ENCODE measurements at regions of chr10 and their contacts with region 1.

Region 1: GRCh38 chr10:104784452-104784851 is 143.4 kb downstream of the SORCS3 start:
- DNase-seq: no peak

Region 2: GRCh38 chr10:104300736-104301292 is 483.6 kb before region 1 on chr10:
- intact Hi-C with region 1: no loop called
- DNase-seq: no peak

Region 3: DNA sequence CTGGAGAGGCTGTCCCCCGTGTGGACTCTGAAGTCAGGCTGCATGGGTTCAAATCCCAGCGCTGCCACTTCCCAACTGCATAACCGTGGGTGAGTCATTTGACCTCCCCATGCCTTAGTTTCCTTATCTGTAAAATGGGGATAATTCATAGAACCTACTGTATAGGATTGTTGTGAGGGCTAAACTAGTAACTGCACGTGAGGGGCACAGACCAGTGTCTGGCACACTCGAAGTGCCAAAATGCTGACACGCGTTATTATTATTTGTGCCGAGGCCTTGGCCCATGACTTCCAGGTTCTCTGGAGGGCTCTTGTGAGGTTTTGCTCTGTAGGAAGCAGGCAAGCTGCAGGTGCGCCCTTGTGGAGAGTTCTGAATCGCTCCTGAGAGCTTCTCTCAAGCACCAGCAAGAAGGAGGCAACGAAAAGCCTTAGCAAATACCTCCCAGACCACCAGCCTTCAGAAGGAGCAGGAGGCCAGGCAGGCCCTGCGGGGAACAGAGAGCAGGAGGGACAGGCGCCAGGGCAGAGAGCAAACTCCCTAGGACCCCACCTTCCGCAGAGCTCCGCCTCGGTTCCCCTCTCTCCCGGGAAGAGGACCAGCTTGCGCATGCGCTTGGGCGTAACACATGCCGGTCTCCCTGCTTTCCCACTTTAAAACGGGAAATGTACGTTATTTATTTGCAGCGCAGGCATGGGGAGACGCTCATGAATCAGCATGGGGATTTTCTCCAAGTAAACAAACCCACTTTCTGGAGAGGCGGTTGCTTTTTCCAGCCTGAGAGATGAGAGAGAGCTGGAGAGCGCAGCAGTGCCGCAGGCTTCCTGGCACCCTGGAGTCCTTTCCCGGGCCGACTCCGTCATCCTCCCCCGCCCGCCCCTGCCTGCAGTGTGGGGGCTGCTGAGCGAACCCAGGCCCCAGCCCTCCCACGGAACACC is 103.7 kb before region 1 on chr10:
- intact Hi-C with region 1: no loop called
- DNase-seq: no peak

Region 4: DNA sequence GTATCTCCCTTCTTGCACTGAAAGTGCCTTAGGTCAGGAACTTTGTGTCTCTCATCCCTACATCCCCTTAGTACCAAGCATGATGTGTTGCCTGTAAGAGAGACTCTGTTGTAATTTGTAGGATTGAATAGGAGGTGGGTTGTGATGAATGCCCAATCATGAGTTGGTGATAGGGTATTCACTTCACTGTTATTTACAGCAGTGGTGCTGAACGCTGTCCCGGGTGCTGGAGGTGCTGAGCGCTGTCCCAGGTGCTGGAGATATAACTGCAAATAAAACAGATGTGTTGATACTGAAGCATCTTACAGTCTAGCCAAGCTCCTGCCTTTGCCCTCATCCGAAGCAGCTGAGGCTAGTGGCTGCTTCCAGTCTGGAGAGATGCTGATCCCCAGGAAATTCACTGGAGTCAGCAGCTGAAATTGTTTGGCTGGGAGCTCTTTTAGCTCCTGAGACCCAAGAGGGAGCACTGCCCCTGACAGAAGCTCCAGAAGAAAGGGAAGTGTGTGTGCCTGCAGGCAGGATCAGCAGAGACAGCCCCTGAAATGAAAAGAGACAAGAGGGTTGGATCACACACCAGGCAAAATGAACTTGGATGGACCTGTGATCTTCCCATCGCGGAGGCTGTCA is 40.0 kb after region 1 on chr10:
- intact Hi-C with region 1: loop called in 1 of 2 experiments (anchors 1 kb)
- DNase-seq: no peak

Region 5: GRCh38 chr10:105104297-105104696 is 319.8 kb after region 1 on chr10:
- intact Hi-C with region 1: no loop called
- DNase-seq: no peak

Measured in posterior vena cava (tissue), 2 donors.